ENCODE measurements at regions of chr18 and their contacts with region 1.

Region 1: GRCh38 chr18:47150029-47150823 is at the start of gene HDHD2:
- DNase-seq: peak; percentile 52 to 90 (median 66)
- ATAC-seq: peak; percentile 86
- H3K4me3 ChIP-seq: peak within 1 kb of the TSS; percentile 88
- H3K4me3 Mint-ChIP-seq: peak within 1 kb of the TSS; percentile 93 to 99 (median 98)
- H3K27ac ChIP-seq: peak within 1 kb of the TSS; percentile 83
- H3K27ac Mint-ChIP-seq: peak within 1 kb of the TSS; percentile 96 to 100 (median 97)
- H3K4me1 ChIP-seq: peaks cover 18 to 24% of the 10 kb centered on the region in 2 donors
- H3K4me1 Mint-ChIP-seq: peaks cover 28 to 64% (median 57%) of the 10 kb centered on the region in 7 donors
- H3K27me3 ChIP-seq: no peaks in the 10 kb centered on the region
- H3K27me3 Mint-ChIP-seq: no peaks in the 10 kb centered on the region
- total RNA-seq, gene HDHD2: 22.7 to 45.7 (median 38.0) TPM

Region 2: GRCh38 chr18:47175908-47176575 is 25.8 kb after region 1 on chr18 and contains the start of gene IER3IP1:
- CTCF ChIA-PET with region 1: no interaction called
- POLR2A ChIA-PET with region 1: interaction called, 8 read pairs
- intact Hi-C with region 1: loop called (anchors 1 kb)
- DNase-seq: peak; percentile 71 to 89 (median 85)
- ATAC-seq: peak; percentile 97
- H3K4me3 ChIP-seq: peak within 1 kb of the TSS; percentile 94
- H3K4me3 Mint-ChIP-seq: peak within 1 kb of the TSS in 8 of 10 donors; percentile 6 to 64 (median 53)
- H3K27ac ChIP-seq: peak within 1 kb of the TSS; percentile 72
- H3K27ac Mint-ChIP-seq: peak within 1 kb of the TSS in 6 of 9 donors; percentile 70 to 91 (median 82)
- H3K4me1 ChIP-seq: peaks cover 10 to 17% of the 10 kb centered on the region in 2 donors
- H3K4me1 Mint-ChIP-seq: peaks cover 0 to 9% (median 0%) of the 10 kb centered on the region in 7 donors
- H3K27me3 ChIP-seq: no peaks in the 10 kb centered on the region
- H3K27me3 Mint-ChIP-seq: peaks cover 0 to 12% (median 0%) of the 10 kb centered on the region in 5 donors
- total RNA-seq, gene IER3IP1: 3.5 to 13.4 (median 8.8) TPM

Measured in naive thymus-derived CD4-positive, alpha-beta T cell (primary cell).